H1 (cell line): ENCODE measurements at regions of chr15 and their contacts with region 1.

Region 1: DNA sequence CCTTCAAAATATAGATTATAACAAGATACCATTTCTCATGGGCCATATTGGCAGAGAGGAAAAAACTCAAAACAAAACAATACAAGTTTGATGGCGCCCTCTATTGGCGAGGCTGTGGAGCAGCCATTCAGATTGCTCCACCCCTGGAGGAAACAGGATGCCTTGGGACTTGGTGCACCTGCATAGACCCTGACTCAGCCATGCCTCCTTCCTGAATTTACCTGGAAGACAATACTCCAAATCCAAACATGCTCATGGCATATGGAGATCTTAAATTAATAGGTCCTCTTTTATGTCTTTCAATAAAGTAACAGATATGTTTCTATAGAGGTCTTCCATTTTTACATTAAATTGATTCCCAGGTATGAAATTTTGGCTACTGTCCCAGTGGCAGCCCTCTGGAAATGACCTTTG is 90.0 kb downstream of the APBA2 start:
- DNase-seq: peak; percentile 29 to 72
- H3K4me3 ChIP-seq: no peak overlapping the region
- H3K27ac ChIP-seq: no peak overlapping the region
- H3K4me1 ChIP-seq: no peaks in the 10 kb centered on the region
- H3K27me3 ChIP-seq: no peaks in the 10 kb centered on the region
- CTCF ChIP-seq: peak; percentile 83 to 92 (median 90)
- EP300 ChIP-seq: no peak
- POLR2A ChIP-seq: no peak
- RAD21 ChIP-seq: peak; percentile 79

Region 2: GRCh38 chr15:28921919-28922706 is 53.7 kb before region 1 on chr15:
- CTCF ChIA-PET with region 1: interaction called, 13 read pairs
- POLR2A ChIA-PET with region 1: no interaction called
- DNase-seq: no peak
- H3K4me3 ChIP-seq: no peak overlapping the region
- H3K27ac ChIP-seq: no peak overlapping the region
- H3K4me1 ChIP-seq: peaks cover 0 to 12% (median 7%) of the 10 kb centered on the region in 4 experiments; a peak in 5 of 7 replicates
- H3K27me3 ChIP-seq: no peaks in the 10 kb centered on the region
- CTCF ChIP-seq: peak; percentile 85 to 89 (median 87)
- EP300 ChIP-seq: no peak
- POLR2A ChIP-seq: no peak
- RAD21 ChIP-seq: peak; percentile 80 to 83

Region 3: GRCh38 chr15:28998511-28998910 is 22.7 kb after region 1 on chr15:
- CTCF ChIA-PET with region 1: no interaction called
- POLR2A ChIA-PET with region 1: no interaction called
- DNase-seq: no peak
- H3K4me3 ChIP-seq: no peak overlapping the region
- H3K27ac ChIP-seq: no peak overlapping the region
- H3K4me1 ChIP-seq: peaks cover 0 to 6% (median 4%) of the 10 kb centered on the region in 4 experiments; a peak in 4 of 7 replicates
- H3K27me3 ChIP-seq: no peaks in the 10 kb centered on the region
- CTCF ChIP-seq: peak; percentile 11 to 22 (median 17); a peak in 3 of 4 replicates
- EP300 ChIP-seq: no peak
- POLR2A ChIP-seq: no peak
- RAD21 ChIP-seq: peak; percentile 46 to 55

Region 4: GRCh38 chr15:29045717-29046116 is 69.9 kb after region 1 on chr15:
- CTCF ChIA-PET with region 1: no interaction called
- POLR2A ChIA-PET with region 1: no interaction called
- DNase-seq: no peak
- H3K4me3 ChIP-seq: no peak overlapping the region
- H3K27ac ChIP-seq: no peak overlapping the region
- H3K4me1 ChIP-seq: peaks cover 0 to 4% (median 0%) of the 10 kb centered on the region in 4 experiments; a peak in 1 of 7 replicates
- H3K27me3 ChIP-seq: no peaks in the 10 kb centered on the region
- CTCF ChIP-seq: no peak
- EP300 ChIP-seq: no peak
- POLR2A ChIP-seq: no peak
- RAD21 ChIP-seq: no peak